ENCODE measurements at regions of chr7 and their contacts with region 1.

Region 1: DNA sequence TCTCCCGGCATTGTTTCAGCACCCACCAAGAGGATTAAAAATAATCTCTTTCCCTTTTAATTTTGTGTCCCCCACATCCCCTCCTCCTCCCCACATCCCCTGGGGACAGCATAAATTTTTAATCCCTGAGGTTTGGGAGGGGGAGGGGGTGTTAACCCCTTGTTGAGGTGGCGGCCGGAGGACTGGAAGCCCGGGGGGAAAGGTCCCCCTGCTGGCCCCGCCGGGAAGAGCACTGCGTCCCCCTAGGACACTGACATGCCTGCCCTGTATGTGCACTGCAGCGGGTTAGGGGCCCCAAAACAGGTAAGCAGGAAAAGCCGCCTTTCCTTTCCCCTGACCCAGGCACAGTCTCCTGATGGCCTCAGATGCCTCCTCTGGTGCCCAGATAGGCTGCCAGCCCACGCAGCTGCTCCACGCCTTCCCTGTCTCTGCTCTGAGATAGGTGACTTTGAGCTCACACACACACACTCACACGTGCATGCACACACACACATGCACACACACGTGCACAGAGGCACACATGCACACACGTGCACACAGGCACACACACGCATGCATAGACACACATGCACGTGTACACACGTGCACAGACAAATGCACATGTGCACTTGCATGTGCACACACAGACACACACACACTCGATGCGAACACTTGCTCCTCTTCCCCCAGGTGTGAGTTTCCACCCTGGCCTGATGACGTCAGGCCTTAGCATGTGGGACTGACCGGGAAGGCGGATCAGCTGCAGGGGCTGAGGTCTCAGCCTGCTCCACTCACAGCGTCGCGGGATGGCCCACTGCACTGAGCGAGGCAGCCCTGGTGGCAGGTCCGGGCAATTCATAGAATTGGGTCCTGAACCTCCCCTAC is 12.3 kb downstream of the CNPY1 start:
- DNase-seq: peak; percentile 76

Region 2: DNA sequence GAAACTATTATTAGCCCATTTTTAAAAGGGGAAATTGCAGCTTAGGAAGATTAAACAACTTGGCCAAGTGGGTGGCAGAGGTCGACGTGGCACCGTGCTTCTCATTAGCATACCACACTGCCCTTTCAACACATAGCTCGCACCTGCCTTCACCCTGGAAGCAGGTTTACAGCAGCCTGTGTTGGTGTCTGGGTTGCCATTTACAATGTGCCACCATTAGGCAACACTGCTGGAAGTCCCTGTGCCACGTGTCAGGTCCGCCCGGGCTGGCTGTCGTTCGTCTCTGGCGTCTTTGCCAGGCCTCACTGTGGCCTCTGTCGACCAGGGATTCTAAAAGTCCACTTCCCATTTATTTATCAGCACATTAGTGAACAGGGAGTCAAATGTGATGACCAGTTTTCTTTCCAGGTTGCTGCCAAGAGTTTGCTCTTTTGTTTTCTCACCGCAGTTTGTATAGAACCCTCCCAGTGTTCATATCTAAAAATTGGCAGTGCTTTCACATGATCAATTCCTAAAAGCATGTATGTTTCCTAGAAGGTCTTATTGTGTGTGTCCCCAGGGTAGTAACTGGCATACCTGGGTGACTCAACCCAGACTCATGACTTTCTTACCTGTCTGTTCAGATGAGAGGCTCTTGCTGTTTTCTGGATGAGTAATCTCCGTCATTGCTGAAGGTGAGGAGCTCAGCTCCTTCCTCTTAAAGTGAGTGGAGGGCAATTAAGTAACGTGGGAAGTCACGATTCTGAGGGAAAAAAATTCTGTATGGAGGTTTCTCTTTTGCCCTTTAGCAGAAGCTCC is 227.2 kb before region 1 on chr7:
- intact Hi-C with region 1: no loop called
- DNase-seq: no peak

Region 3: GRCh38 chr7:155523168-155523675 is 10.8 kb before region 1 on chr7:
- intact Hi-C with region 1: loop called in 1 of 2 experiments (anchors 1 kb)
- DNase-seq: peak; percentile 55

Region 4: GRCh38 chr7:155590215-155591018 is 56.4 kb after region 1 on chr7:
- intact Hi-C with region 1: no loop called
- DNase-seq: peak; percentile 86

Region 5: DNA sequence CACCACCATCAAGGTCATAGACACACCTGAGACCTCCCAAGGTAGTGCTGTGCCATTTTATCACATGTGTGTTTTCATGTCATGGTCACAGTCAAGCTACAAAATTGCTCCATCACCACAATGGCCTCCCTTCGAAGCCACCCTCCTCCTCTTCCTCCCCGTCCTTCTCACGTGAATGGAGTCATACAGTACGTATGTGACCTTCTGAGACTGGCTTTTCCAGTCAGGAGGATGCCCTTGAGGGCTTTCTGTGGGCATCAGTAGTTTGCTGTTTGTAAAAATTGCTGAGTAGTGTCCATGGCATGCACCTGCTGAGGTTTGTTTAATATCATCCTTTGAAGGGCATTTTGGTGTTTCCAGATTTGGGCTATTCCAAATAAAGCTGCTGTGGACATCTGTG is 1598.7 kb after region 1 on chr7:
- intact Hi-C with region 1: loop called in 1 of 2 experiments (anchors 5 kb)
- DNase-seq: no peak